Endothelial cell of umbilical vein (primary cell): ENCODE measurements at regions of chr21 and their contacts with region 1.

Region 1: GRCh38 chr21:39647476-39647875 is 34.7 kb downstream of the B3GALT5 start:
- DNase-seq: peak; percentile 39
- H3K4me3 ChIP-seq: no peak overlapping the region
- H3K27ac ChIP-seq: no peak overlapping the region
- H3K4me1 ChIP-seq: peaks cover 7% of the 10 kb centered on the region
- H3K27me3 ChIP-seq: no peaks in the 10 kb centered on the region
- CTCF ChIP-seq: no peak
- POLR2A ChIP-seq: no peak

Region 2: GRCh38 chr21:39612233-39613040 is 35.0 kb before region 1 on chr21 and contains the start of gene B3GALT5:
- CTCF ChIA-PET with region 1: no interaction called
- POLR2A ChIA-PET with region 1: no interaction called
- dilution Hi-C with region 1: no loop called
- intact Hi-C with region 1: no loop called
- DNase-seq: no peak
- H3K4me3 ChIP-seq: no peak within 1 kb of the TSS
- H3K27ac ChIP-seq: no peak within 1 kb of the TSS
- H3K4me1 ChIP-seq: no peaks in the 10 kb centered on the region
- H3K27me3 ChIP-seq: peaks cover 19 to 28% of the 10 kb centered on the region in 2 experiments
- CTCF ChIP-seq: no peak
- POLR2A ChIP-seq: no peak
- total RNA-seq, gene B3GALT5: not detected in 2 replicates

Region 3: GRCh38 chr21:39660191-39660980 is 12.9 kb after region 1 on chr21:
- CTCF ChIA-PET with region 1: no interaction called
- POLR2A ChIA-PET with region 1: no interaction called
- dilution Hi-C with region 1: no loop called
- intact Hi-C with region 1: loop called (anchors 1 kb)
- DNase-seq: peak; percentile 43
- H3K4me3 ChIP-seq: peak overlapping the region in 1 of 3 experiments; percentile 1
- H3K27ac ChIP-seq: peak overlapping the region; percentile 42
- H3K4me1 ChIP-seq: peaks cover 13% of the 10 kb centered on the region
- H3K27me3 ChIP-seq: no peaks in the 10 kb centered on the region
- CTCF ChIP-seq: no peak
- POLR2A ChIP-seq: no peak

Region 4: GRCh38 chr21:39715804-39716397 is 68.4 kb after region 1 on chr21:
- CTCF ChIA-PET with region 1: no interaction called
- POLR2A ChIA-PET with region 1: no interaction called
- dilution Hi-C with region 1: no loop called
- intact Hi-C with region 1: loop called (anchors 10 kb)
- DNase-seq: peak; percentile 36
- H3K4me3 ChIP-seq: no peak overlapping the region
- H3K27ac ChIP-seq: no peak overlapping the region
- H3K4me1 ChIP-seq: no peaks in the 10 kb centered on the region
- H3K27me3 ChIP-seq: no peaks in the 10 kb centered on the region
- CTCF ChIP-seq: peak; percentile 45 to 46
- POLR2A ChIP-seq: no peak